SK-N-SH (cell line): ENCODE measurements at regions of chr17 and their contacts with region 1.

Region 1: GRCh38 chr17:32429598-32429997 is 14.7 kb upstream of the PSMD11 start:
- DNase-seq: no peak
- H3K4me3 ChIP-seq: no peak overlapping the region
- H3K27ac ChIP-seq: no peak overlapping the region
- H3K4me1 ChIP-seq: no peaks in the 10 kb centered on the region
- H3K27me3 ChIP-seq: no peaks in the 10 kb centered on the region
- CTCF ChIP-seq: no peak
- EP300 ChIP-seq: no peak
- RAD21 ChIP-seq: no peak

Region 2: GRCh38 chr17:32444308-32445073 is 14.9 kb after region 1 on chr17 and contains the start of gene PSMD11:
- CTCF ChIA-PET with region 1: interaction called, 22 read pairs
- POLR2A ChIA-PET with region 1: no interaction called
- DNase-seq: peak; percentile 99
- H3K4me3 ChIP-seq: peak within 1 kb of the TSS; percentile 82 to 96
- H3K27ac ChIP-seq: peak within 1 kb of the TSS; percentile 80 to 85
- H3K4me1 ChIP-seq: peaks cover 14% of the 10 kb centered on the region in 2 experiments; a peak in 3 of 4 replicates
- H3K27me3 ChIP-seq: no peaks in the 10 kb centered on the region
- CTCF ChIP-seq: no peak
- EP300 ChIP-seq: peak in 1 of 2 experiments; percentile 24; a peak in 1 of 4 replicates
- RAD21 ChIP-seq: no peak
- polyA plus RNA-seq, gene PSMD11: 63.1 and 81.9 TPM in 2 replicates

Region 3: GRCh38 chr17:32519228-32520103 is 89.9 kb after region 1 on chr17:
- CTCF ChIA-PET with region 1: no interaction called
- POLR2A ChIA-PET with region 1: no interaction called
- DNase-seq: peak; percentile 93
- H3K4me3 ChIP-seq: peak overlapping the region; percentile 45 to 58
- H3K27ac ChIP-seq: peak overlapping the region in 1 of 2 experiments; percentile 72; a peak in 2 of 4 replicates
- H3K4me1 ChIP-seq: peaks cover 6 to 19% of the 10 kb centered on the region in 2 experiments; a peak in 2 of 4 replicates
- H3K27me3 ChIP-seq: no peaks in the 10 kb centered on the region
- CTCF ChIP-seq: no peak
- EP300 ChIP-seq: no peak
- RAD21 ChIP-seq: no peak